Right ventricle myocardium inferior (tissue), 1 donor: ENCODE measurements at regions of chr3 and their contacts with region 1.

Region 1: DNA sequence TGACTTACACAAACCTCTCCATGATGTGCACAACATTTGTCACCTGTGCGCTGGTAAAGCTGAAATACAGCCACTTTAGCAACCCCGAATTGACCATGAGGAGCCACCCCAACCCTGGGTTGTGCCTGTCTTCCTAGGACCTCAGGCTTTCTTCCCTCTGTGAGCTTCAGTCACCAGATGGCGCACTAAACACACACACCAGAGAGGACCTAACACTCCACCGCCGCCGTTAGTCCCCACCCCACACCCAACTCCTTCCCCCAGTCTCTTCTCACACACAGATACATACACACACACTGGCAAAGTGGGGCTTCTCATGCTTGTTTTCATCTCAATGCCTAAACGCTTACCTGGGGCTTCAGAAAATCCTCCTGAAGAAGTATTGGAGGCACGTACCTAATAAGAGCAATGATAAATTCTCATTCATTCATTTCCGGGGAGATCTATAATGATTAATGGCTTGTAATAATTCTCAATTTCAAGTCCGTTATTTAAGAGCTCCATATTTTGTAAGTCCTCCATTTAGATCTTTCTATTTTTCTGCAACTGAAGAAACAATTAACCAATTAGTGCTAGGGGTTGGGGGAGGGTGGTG is 2.1 kb upstream of the CCDC80 start:
- DNase-seq: peak; percentile 90
- ATAC-seq: peak; percentile 86

Region 2: DNA sequence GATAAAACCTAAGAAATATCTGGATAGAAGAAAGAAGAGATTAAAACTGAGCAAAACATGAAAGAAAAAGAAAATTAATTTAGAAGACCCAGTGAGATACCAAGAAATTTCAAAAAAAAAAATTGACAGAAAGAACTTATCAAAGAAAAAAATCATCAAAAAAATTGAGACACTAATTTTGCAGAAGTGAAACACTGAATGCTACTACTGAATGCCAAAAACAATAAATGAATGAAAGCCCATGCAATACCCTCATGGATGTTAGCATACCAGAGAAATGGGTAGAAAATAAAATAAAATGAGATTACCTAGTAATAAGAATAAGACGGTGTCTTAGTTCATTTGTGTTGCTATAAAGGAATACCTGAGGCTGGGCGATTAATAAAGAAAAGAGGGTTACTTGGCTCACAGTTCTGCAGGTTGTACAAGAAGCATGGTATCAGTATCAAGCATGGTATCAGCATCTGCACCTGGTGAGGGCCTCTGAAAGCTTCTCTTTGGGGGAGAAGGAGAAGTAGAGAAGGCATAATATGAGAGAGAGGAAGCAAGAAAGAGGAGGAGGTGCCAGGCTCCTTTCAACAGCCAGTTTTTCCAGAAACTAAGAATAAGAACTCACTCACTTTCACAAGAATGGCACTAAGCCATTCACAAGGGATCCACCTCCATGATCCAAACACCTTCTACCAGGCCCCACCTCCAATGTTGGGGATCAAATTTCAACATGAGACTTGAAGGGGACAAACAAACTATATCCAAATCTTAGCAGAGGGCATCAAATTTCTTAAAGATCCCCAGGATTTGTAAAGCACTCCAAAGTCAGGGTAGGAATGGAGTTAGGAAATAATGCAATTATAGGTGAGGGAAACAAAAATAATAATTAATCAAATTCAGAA is 216.9 kb before region 1 on chr3:
- intact Hi-C with region 1: no loop called
- DNase-seq: no peak
- ATAC-seq: no peak

Region 3: GRCh38 chr3:112699436-112699978 is 56.5 kb after region 1 on chr3:
- intact Hi-C with region 1: loop called (anchors 2 kb)
- DNase-seq: no peak
- ATAC-seq: no peak

Region 4: DNA sequence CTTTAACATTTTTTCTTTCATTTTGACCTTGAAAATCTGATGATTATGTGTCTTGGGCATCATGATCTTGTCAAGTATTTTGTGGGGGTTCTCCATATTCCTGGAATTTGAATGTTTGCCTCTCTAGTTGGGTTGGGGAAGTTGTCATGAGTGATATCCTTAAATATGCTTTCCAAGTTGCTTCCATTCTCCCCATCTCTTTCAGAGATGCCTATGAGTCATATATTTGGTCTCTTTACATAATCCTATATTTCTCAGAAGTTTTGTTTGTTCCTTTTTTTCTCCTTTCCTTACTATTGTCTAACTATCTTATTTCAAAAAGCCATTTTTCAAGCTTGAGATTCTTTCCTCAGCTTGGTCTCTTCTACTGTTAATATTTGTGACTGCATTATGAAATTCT is 66.9 kb after region 1 on chr3:
- intact Hi-C with region 1: no loop called
- DNase-seq: no peak
- ATAC-seq: no peak

Region 5: GRCh38 chr3:112734718-112735350 is 91.8 kb after region 1 on chr3:
- intact Hi-C with region 1: loop called (anchors 10 kb)
- DNase-seq: no peak
- ATAC-seq: no peak

Region 6: GRCh38 chr3:112814266-112814665 is 171.3 kb after region 1 on chr3:
- intact Hi-C with region 1: loop called (anchors 2 kb)
- DNase-seq: no peak
- ATAC-seq: peak; percentile 35

Region 7: DNA sequence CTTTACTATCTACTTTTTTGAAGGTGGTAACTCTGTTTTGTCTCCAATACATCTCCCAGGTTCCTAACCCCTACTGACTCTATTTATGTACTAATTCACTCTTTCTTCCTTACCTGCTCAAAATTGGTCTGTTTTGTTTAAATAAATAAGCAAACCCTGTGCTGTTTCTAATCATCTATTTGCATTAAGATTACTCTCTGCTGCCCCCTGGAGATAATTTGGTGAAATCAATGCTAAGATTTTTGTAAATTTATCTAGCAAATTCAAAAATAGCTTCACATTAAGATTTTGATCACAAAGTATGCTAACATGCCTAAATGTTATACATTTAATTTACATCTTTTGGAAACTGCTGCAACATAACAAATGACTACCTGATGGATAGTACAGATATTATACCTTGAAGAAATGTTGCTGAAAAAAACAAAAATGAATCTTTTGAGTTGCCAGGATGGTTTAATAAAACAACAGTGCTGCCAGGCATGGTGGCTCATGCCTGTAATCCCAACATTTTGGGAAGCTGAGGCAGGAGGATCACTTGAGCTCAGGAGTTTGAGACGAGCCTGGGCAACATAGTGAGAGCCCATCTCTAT is 336.3 kb after region 1 on chr3:
- intact Hi-C with region 1: loop called (anchors 1 kb)
- DNase-seq: no peak
- ATAC-seq: no peak